Activated B cell treated with CpG ODN at 0.5 μM for 24 hours (primary cell): ENCODE measurements at regions of chr12 and their contacts with region 1.

Region 1: GRCh38 chr12:4197922-4198763 is 75.4 kb upstream of the CCND2 start:
- DNase-seq: no peak
- ATAC-seq: no peak
- H3K4me3 Mint-ChIP-seq: no peak overlapping the region
- H3K27ac Mint-ChIP-seq: no peak overlapping the region
- H3K4me1 Mint-ChIP-seq: peaks cover 42% of the 10 kb centered on the region
- H3K27me3 Mint-ChIP-seq: no peaks in the 10 kb centered on the region
- CTCF ChIP-seq: no peak

Region 2: GRCh38 chr12:3107071-3107583 is 1091.0 kb before region 1 on chr12:
- CTCF ChIA-PET with region 1: no interaction called
- POLR2A ChIA-PET with region 1: no interaction called
- intact Hi-C with region 1: no loop called
- DNase-seq: no peak
- ATAC-seq: no peak
- H3K4me3 Mint-ChIP-seq: no peak overlapping the region
- H3K27ac Mint-ChIP-seq: no peak overlapping the region
- H3K4me1 Mint-ChIP-seq: no peaks in the 10 kb centered on the region
- H3K27me3 Mint-ChIP-seq: peaks cover 8% of the 10 kb centered on the region
- CTCF ChIP-seq: no peak

Region 3: GRCh38 chr12:4056910-4057845 is 141.0 kb before region 1 on chr12:
- CTCF ChIA-PET with region 1: no interaction called
- POLR2A ChIA-PET with region 1: no interaction called
- intact Hi-C with region 1: no loop called
- DNase-seq: no peak
- ATAC-seq: no peak
- H3K4me3 Mint-ChIP-seq: no peak overlapping the region
- H3K27ac Mint-ChIP-seq: no peak overlapping the region
- H3K4me1 Mint-ChIP-seq: no peaks in the 10 kb centered on the region
- H3K27me3 Mint-ChIP-seq: peaks cover 21% of the 10 kb centered on the region
- CTCF ChIP-seq: no peak

Region 4: GRCh38 chr12:4174417-4174816 is 23.7 kb before region 1 on chr12:
- CTCF ChIA-PET with region 1: no interaction called
- POLR2A ChIA-PET with region 1: no interaction called
- intact Hi-C with region 1: loop called (anchors 2 kb)
- DNase-seq: no peak
- ATAC-seq: no peak
- H3K4me3 Mint-ChIP-seq: no peak overlapping the region
- H3K27ac Mint-ChIP-seq: no peak overlapping the region
- H3K4me1 Mint-ChIP-seq: peaks cover 9% of the 10 kb centered on the region
- H3K27me3 Mint-ChIP-seq: no peaks in the 10 kb centered on the region
- CTCF ChIP-seq: no peak

Region 5: DNA sequence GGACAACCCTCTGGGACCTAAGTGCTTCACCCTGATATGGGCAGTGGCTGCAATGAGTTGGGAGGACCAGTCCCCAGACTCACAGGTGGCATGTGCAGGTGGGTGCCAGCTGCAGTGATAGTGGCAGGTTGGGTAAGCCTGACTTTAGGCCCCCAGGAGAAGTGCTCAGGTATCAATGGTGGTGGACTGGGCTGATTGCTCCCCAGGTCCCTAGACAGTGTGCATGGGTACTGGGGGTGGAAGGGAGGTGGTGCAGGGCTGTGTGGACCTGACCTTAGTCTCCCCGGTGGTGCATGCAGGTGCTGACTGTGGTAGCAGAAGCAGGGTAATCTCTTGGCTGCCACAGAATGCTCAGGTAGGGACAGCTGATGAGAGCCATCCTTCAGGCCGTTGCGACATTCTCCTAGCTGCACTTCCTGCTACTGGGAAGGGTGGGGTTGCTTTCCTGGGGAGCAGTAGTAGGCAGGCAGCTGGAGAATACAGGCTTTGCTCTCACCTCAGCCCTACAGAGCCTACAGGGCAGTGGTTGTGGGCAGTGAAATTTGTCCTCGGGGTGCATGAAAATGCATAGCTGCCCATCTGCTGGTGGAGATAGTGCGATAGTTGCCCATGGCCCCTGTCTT is 42.1 kb after region 1 on chr12:
- CTCF ChIA-PET with region 1: no interaction called
- POLR2A ChIA-PET with region 1: no interaction called
- intact Hi-C with region 1: no loop called
- DNase-seq: no peak
- ATAC-seq: no peak
- H3K4me3 Mint-ChIP-seq: no peak overlapping the region
- H3K27ac Mint-ChIP-seq: no peak overlapping the region
- H3K4me1 Mint-ChIP-seq: no peaks in the 10 kb centered on the region
- H3K27me3 Mint-ChIP-seq: peaks cover 9% of the 10 kb centered on the region
- CTCF ChIP-seq: no peak